Left ventricle myocardium inferior (tissue), 1 donor: ENCODE measurements at regions of chr1 and their contacts with region 1.

Region 1: DNA sequence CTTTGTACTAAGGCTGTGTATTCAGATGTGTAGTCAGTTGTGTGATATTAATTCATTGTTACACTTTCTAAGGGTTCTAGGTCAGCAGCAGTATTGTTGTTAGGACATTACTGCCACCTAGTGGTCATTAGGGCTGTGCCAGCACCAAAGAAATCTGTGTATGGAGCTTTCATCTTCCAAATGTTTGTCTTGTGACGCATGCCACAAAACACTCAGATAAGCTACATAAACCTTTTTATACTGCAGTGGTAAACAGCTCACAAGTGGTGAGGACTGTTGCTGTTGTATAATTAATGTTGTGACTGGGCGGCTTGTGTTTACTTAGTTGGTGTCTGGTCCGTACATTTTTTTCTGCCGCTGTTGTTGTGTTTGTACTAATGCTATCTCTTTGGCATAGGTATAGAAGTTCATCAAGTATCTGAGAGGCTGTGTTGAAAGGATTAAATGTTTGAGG is 51.7 kb downstream of the S1PR1 start:
- DNase-seq: peak; percentile 30
- H3K4me3 ChIP-seq: peak overlapping the region; percentile 37
- H3K27ac ChIP-seq: peak overlapping the region; percentile 25
- H3K4me1 ChIP-seq: peaks cover 16% of the 10 kb centered on the region
- H3K27me3 ChIP-seq: no peaks in the 10 kb centered on the region
- CTCF ChIP-seq: peak; percentile 97

Region 2: GRCh38 chr1:100921109-100921706 is 367.3 kb before region 1 on chr1:
- intact Hi-C with region 1: loop called (anchors 5 kb)
- DNase-seq: no peak
- H3K4me3 ChIP-seq: no peak overlapping the region
- H3K27ac ChIP-seq: no peak overlapping the region
- H3K4me1 ChIP-seq: no peaks in the 10 kb centered on the region
- H3K27me3 ChIP-seq: no peaks in the 10 kb centered on the region
- CTCF ChIP-seq: peak; percentile 78

Region 3: GRCh38 chr1:101071470-101071891 is 217.0 kb before region 1 on chr1:
- intact Hi-C with region 1: no loop called
- DNase-seq: no peak
- H3K4me3 ChIP-seq: no peak overlapping the region
- H3K27ac ChIP-seq: peak overlapping the region; percentile 5
- H3K4me1 ChIP-seq: peaks cover 21% of the 10 kb centered on the region
- H3K27me3 ChIP-seq: no peaks in the 10 kb centered on the region
- CTCF ChIP-seq: no peak

Region 4: DNA sequence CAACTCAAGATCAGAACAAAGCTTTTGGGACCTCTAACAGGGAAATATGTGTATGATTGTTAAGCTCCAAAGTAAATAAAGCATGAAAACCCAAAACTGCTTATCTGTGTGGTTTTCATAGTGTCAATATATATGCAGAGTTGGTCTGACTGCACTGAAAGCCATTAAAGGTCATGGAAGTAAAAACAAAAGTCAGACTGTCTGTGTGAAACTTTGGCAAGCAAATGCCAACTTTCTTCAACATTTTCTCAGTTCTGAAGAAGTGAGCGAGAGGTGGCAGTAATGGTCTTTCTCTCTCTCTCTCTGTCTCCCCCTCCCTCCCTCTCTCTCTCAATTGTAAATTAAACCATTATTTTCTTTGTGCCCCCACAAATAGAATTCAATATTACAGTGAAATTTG is 151.8 kb before region 1 on chr1:
- intact Hi-C with region 1: loop called (anchors 10 kb)
- DNase-seq: no peak
- H3K4me3 ChIP-seq: no peak overlapping the region
- H3K27ac ChIP-seq: peak overlapping the region; percentile 9
- H3K4me1 ChIP-seq: peaks cover 33% of the 10 kb centered on the region
- H3K27me3 ChIP-seq: no peaks in the 10 kb centered on the region
- CTCF ChIP-seq: peak; percentile 46